Aorta (tissue), 5 donors: ENCODE measurements at regions of chr22 and their contacts with region 1.

Region 1: GRCh38 chr22:21712894-21713712 is 22.5 kb downstream of the YPEL1 start:
- DNase-seq: peak in 1 of 2 donors; percentile 75
- ATAC-seq: peak; percentile 93
- H3K4me3 ChIP-seq: no peak overlapping the region
- H3K27ac ChIP-seq: peak overlapping the region in 1 of 2 donors; percentile 43
- H3K4me1 ChIP-seq: no peaks in the 10 kb centered on the region
- H3K27me3 ChIP-seq: no peaks in the 10 kb centered on the region

Region 2: DNA sequence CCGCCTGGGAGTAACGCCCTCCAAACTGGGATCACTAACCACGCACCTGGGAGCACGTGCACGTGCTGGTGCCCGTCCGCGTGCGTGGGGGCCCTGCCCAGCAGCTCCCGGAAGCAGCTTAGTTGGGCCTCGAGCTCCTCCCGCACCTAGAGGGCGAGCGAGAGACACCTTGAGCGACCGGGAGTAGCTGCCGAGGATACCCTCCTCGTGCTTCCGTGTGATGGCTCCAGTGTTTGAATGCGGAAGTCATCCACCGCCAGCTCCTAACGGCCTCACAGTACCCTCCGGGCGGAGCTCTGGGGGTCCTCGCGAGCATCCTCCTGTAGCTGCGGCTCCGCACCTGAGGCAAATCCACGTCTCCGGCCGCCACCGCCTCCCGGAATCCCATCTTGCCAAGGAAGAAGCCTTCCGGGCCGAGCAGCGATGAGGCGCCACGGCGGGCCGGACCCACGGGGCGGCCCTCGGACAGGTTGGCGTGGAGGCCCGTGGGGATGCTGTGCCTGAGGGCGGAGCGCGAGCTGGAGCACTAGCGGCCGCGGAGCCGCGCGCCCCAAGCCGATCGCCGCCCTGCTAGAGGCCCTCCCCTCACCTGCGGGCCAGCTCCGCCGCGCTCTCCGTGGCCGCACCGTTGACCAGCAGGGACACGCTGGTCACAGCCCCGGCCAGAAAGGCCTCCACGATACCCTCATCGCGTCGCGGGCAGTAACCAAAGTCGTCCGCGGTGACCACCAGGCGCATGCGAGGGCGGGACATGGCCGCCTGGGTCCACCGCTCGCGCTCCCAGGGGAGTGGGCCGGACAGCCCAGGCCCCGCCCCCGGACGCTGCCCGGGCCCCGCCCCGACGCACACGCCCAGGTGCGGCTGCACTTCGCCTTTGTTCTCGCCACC is 83.6 kb before region 1 on chr22 and contains the start of gene YDJC:
- intact Hi-C with region 1: no loop called
- DNase-seq: peak; percentile 95 to 98
- ATAC-seq: peak; percentile 95
- H3K4me3 ChIP-seq: peak within 1 kb of the TSS; percentile 19 to 55
- H3K27ac ChIP-seq: peak within 1 kb of the TSS in 1 of 2 donors; percentile 14
- H3K4me1 ChIP-seq: no peaks in the 10 kb centered on the region
- H3K27me3 ChIP-seq: no peaks in the 10 kb centered on the region
- total RNA-seq, gene YDJC: 9.0 to 10.2 TPM

Region 3: GRCh38 chr22:21652010-21652546 is 61.0 kb before region 1 on chr22:
- intact Hi-C with region 1: no loop called
- DNase-seq: peak; percentile 93 to 96
- ATAC-seq: peak; percentile 94
- H3K4me3 ChIP-seq: peak overlapping the region; percentile 53 to 70
- H3K27ac ChIP-seq: no peak overlapping the region
- H3K4me1 ChIP-seq: no peaks in the 10 kb centered on the region
- H3K27me3 ChIP-seq: no peaks in the 10 kb centered on the region

Region 4: DNA sequence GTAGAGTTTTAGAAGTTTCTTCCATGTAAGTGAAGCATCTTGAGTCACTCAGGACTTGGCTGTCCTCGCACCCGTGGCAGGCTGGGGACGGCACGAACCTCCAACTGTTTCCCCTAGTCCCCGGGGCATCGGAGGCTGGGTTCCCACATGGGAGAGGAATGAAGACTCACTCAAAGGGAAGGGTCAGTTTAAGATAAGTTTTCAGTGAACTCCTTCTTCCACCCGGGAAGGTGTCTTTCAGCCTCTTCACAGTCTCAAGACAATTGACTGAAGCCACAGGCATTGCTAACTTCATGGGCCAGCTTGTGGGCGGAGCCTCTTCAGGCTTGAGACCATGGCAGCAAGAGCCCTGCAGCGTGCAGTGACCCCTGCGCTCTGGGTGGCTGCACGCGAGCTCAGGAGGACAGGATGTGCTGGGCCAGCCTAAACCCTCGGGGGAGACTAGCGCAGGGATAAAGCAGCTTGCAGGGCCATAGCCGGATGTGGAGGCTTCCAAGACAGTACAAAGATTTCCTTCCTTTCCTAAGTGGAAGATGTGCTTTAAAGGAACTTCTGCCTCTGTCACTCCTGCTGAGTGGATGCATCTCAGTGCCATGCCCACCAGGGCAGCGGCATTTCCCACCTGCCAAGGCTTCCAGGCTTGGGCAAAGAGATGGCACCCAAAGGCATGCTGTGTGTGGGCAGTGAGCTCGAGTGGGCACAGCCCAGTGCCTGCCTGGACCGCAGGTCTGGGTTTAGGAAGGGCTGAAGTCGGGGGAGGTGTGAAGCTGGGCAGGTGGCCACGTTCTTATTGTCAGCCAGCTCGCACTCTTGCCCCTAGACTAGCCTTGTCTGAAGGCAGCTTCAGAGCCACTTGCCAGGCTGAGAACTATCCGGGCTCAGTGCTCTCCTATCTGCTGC is 14.4 kb before region 1 on chr22:
- intact Hi-C with region 1: no loop called
- DNase-seq: peak in 1 of 2 donors; percentile 87
- ATAC-seq: peak; percentile 53
- H3K4me3 ChIP-seq: no peak overlapping the region
- H3K27ac ChIP-seq: peak overlapping the region; percentile 34 to 92
- H3K4me1 ChIP-seq: peaks cover 0 to 5% of the 10 kb centered on the region in 2 donors
- H3K27me3 ChIP-seq: no peaks in the 10 kb centered on the region

Region 5: DNA sequence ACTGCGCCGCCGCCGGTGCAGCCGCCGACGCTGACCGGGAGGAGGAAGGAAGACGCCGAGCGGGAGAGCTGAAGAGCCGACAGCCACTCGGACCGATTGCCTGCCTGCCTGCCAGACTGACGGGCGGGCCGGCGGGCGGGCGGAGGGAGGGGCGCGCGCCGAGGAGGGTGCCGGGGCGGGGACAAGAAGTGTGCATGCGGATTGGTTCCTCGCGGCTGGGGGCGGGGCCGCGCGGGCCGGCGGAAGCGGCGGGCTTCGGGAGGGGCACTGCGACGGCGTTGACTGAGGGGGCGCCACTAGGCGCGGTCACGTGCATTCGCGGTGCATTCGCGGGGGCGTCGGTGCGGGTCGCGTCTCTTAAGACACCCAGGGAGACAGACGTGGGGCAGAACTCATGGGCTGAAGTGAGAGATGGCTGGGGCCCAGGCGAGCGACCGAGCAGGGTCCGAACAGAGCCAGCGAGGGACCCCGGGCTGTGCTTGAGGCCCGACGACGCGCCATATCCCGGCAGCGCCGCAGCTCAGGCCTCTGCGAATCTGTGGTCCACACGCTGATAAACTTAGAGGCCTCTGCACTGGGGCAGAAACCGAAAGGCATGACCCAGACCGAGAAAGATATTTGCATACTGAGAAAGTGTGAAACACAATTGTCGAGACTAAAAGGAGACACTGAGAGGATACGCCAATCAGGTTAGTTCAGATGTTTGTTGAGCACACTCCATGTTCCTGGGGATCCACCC is 154.6 kb after region 1 on chr22 and contains the start of gene MAPK1:
- intact Hi-C with region 1: no loop called
- DNase-seq: peak; percentile 96 to 98
- ATAC-seq: peak; percentile 98
- H3K4me3 ChIP-seq: peak within 1 kb of the TSS; percentile 97
- H3K27ac ChIP-seq: peak within 1 kb of the TSS; percentile 91 to 95
- H3K4me1 ChIP-seq: peaks cover 0 to 3% of the 10 kb centered on the region in 2 donors
- H3K27me3 ChIP-seq: no peaks in the 10 kb centered on the region
- total RNA-seq, gene MAPK1: 137 to 159 TPM

Region 6: DNA sequence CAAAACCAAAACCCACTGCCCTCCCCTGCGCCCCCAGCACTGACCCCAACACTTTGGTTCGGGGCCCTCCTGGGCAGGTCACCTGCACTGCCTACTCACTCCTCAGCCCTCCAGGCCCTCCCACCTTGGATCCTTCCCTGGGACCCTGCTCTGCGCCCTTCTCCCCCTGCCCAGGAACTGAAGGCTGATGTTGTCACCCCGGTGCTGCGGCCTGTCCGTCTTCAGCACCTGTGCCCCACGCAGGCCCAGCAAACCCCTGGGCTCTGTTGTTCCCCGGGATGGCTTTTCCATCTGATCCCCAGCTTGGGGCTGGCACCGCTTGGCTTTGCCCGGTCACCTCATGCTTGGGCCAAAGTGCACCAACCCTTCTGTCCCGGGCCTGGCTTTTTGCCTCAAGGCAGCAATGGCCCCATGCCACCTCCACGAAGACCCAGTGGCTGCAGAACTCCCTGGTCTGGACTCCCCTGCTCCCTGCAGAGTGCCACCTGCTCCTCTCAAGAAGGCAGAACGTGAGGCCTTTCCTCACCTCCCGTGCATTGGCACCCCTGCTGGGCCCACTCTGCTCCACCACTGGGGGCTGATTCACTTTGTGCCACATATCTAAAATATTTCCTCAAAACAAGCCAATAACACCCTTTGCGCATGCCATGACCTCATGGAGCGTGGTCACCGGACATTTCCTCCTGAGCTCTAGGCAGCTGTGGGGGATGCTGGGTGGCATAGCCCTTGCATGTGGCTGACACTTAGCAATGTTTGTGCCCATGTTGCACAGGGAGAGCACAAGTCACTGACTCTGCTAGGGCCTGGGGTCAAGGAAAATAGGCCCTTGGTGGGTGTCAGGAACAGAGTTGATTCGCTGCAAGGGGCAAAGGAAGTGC is 230.7 kb after region 1 on chr22:
- intact Hi-C with region 1: loop called in 1 of 2 experiments (anchors 2 kb)
- DNase-seq: no peak
- ATAC-seq: no peak
- H3K4me3 ChIP-seq: no peak overlapping the region
- H3K27ac ChIP-seq: no peak overlapping the region
- H3K4me1 ChIP-seq: no peaks in the 10 kb centered on the region
- H3K27me3 ChIP-seq: no peaks in the 10 kb centered on the region

Region 7: DNA sequence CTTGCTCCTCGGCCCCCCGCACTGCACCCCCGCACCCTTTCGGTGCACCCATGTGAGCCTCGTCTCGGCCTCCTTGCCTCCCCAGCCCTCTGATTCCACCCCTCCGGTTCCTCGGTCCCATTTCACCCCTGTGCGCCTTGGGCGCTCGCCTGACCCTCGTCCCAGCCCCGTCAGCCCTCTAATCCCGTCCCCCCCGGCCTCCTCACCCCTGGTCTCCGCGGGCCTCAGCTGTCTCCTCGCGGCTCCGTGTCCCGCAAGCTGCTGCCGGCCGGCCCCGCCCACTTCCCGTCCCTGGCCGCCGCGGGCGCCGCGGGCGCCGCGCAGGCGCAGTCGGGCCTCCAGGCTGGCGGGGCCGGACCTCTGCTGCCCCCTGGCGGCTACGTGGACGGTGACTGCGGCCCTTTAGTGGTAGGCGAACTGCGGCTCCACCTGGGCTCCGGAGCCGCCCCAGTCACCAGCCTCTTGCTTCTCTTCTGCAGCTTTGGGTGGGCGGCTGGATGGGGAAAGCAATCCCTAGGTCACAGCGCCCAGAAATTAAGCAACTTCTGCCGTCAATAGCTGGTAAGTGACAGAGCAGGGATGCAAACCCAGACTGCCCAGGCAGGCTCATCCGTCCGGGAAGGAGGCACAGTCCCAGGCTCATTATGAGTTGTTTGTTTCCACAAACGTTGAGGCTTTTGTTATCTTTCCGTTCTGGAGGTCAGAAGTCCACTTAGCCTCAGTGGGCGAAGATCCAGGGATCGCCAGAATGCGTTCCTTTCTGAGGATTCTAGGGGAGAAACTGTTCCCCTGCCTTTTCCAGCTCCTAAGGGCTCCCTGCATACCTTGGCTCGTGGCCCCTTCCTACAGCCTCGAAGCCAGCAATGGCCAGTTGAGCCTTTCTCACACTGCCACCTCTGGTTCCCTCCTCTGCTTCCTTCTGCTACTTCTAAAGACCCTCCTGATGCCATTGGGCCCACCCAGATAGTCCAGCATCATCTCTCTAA is 239.8 kb after region 1 on chr22 and contains the start of gene PPM1F:
- intact Hi-C with region 1: loop called in 1 of 2 experiments (anchors 2 kb)
- DNase-seq: peak; percentile 91 to 96
- ATAC-seq: peak; percentile 90
- H3K4me3 ChIP-seq: peak within 1 kb of the TSS; percentile 42 to 53
- H3K27ac ChIP-seq: no peak within 1 kb of the TSS
- H3K4me1 ChIP-seq: no peaks in the 10 kb centered on the region
- H3K27me3 ChIP-seq: no peaks in the 10 kb centered on the region
- total RNA-seq, gene PPM1F: 50.3 to 65.1 TPM